ENCODE measurements at regions of chr1 and their contacts with region 1.

Region 1: GRCh38 chr1:58896246-58897183 is 112.7 kb upstream of the JUN start:
- DNase-seq: peak; percentile 64 to 84 (median 80)
- ATAC-seq: peak; percentile 81 to 87 (median 84)
- H3K4me3 ChIP-seq: no peak overlapping the region
- H3K27ac ChIP-seq: peak overlapping the region; percentile 53 to 82 (median 74)
- H3K4me1 ChIP-seq: peaks cover 13 to 83% (median 68%) of the 10 kb centered on the region in 12 donors
- H3K27me3 ChIP-seq: no peaks in the 10 kb centered on the region
- CTCF ChIP-seq: peak in 1 of 12 donors; percentile 30
- POLR2A ChIP-seq: no peak

Region 2: GRCh38 chr1:58802638-58803399 is 93.7 kb before region 1 on chr1:
- intact Hi-C with region 1: no loop called
- DNase-seq: no peak
- ATAC-seq: no peak
- H3K4me3 ChIP-seq: no peak overlapping the region
- H3K27ac ChIP-seq: no peak overlapping the region
- H3K4me1 ChIP-seq: no peaks in the 10 kb centered on the region
- H3K27me3 ChIP-seq: no peaks in the 10 kb centered on the region
- CTCF ChIP-seq: no peak
- POLR2A ChIP-seq: no peak

Region 3: GRCh38 chr1:58816072-58816746 is 80.3 kb before region 1 on chr1:
- intact Hi-C with region 1: loop called in 5 of 10 experiments (anchors 2 to 10 kb)
- DNase-seq: peak; percentile 92 to 96 (median 94)
- ATAC-seq: peak; percentile 80 to 93 (median 90)
- H3K4me3 ChIP-seq: peak overlapping the region; percentile 32 to 71 (median 64)
- H3K27ac ChIP-seq: peak overlapping the region; percentile 87 to 96 (median 92)
- H3K4me1 ChIP-seq: peaks cover 0 to 59% (median 20%) of the 10 kb centered on the region in 12 donors
- H3K27me3 ChIP-seq: no peaks in the 10 kb centered on the region
- CTCF ChIP-seq: peak in 3 of 12 donors; percentile 19 to 30 (median 26)
- POLR2A ChIP-seq: peak in 1 of 2 donors; percentile 55

Region 4: GRCh38 chr1:58932859-58933598 is 36.5 kb after region 1 on chr1:
- intact Hi-C with region 1: no loop called
- DNase-seq: no peak
- ATAC-seq: peak; percentile 22 to 52 (median 30)
- H3K4me3 ChIP-seq: no peak overlapping the region
- H3K27ac ChIP-seq: no peak overlapping the region
- H3K4me1 ChIP-seq: peaks cover 0 to 13% (median 0%) of the 10 kb centered on the region in 12 donors
- H3K27me3 ChIP-seq: no peaks in the 10 kb centered on the region
- CTCF ChIP-seq: no peak
- POLR2A ChIP-seq: no peak

Region 5: GRCh38 chr1:59057211-59057694 is 160.7 kb after region 1 on chr1:
- intact Hi-C with region 1: loop called in 3 of 10 experiments (anchors 5 to 10 kb)
- DNase-seq: peak; percentile 81 to 91 (median 84)
- ATAC-seq: peak; percentile 89 to 93 (median 91)
- H3K4me3 ChIP-seq: no peak overlapping the region
- H3K27ac ChIP-seq: peak overlapping the region; percentile 35 to 77 (median 58)
- H3K4me1 ChIP-seq: peaks cover 0 to 42% (median 26%) of the 10 kb centered on the region in 12 donors
- H3K27me3 ChIP-seq: no peaks in the 10 kb centered on the region
- CTCF ChIP-seq: peak in 3 of 12 donors; percentile 12 to 37 (median 22)
- POLR2A ChIP-seq: peak in 1 of 2 donors; percentile 57

Region 6: DNA sequence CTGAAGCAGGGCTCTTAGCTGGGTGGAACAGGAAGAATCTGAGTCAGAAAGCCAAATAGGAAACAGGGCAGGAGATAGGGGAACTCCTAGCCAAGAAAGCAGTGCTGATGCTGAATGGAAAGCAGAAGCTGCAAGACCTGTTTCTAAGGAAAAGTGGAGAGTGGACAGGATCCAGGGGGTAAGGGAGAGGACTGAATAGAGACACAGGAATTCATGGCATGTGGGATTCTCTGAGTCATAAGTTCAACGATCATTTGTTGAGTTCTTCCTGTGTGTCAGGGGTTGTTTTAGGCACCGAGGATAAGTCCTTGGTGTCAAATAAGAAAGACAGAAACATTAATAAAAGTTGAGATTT is 246.6 kb after region 1 on chr1:
- intact Hi-C with region 1: loop called in 7 of 10 experiments (anchors 5 to 10 kb)
- DNase-seq: peak in 2 of 5 donors; percentile 23 to 41
- ATAC-seq: peak in 3 of 4 donors; percentile 25 to 43 (median 32)
- H3K4me3 ChIP-seq: no peak overlapping the region
- H3K27ac ChIP-seq: peak overlapping the region in 10 of 12 donors; percentile 2 to 91 (median 80)
- H3K4me1 ChIP-seq: peaks cover 6 to 74% (median 55%) of the 10 kb centered on the region in 12 donors
- H3K27me3 ChIP-seq: no peaks in the 10 kb centered on the region
- CTCF ChIP-seq: no peak
- POLR2A ChIP-seq: no peak

Measured in heart left ventricle (tissue), 16 donors.